ENCODE measurements at regions of chr20 and their contacts with region 1.

Region 1: DNA sequence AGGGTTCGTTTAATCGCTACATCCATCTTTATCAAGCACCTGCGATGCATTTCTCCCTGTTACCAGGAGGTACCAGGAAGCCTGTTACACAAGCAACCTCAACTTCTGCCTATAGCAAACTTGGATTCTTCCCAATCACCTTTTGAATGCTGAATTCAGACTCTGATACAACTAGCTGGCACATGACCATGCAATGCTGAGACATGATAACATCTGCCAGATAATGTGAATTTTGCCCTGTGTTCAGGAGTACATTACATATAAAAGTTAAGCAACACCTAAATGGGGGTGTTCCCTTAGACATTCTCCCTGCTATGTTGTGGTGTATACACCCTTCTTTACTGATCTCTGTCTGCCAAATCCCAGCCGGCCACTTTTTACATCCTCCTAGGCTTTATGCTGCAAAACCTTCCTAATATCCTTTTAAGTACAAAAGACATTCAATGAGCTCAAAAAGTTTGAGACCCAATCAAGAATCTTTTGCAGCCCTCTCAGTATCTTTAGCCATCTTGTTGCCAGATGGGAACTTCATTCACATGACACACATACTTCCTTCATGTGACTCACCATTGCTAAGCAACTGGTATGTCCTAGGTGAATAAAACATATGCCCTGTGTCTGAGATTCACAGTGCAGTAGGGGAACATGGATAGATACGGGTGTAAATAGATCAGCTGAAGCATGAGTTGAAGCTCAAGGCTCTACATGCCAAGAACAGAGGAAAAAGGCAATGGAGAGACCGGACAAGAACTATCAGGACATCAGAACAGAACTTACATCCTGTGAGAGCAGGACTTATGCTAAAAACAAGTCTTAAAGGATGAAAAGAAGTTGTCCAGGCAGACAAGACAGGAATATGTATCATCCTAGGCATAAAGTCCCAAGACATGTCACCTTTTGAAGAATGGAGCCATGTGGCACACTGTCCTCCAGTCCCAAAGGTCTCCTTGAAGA is 84.3 kb downstream of the ZHX3 start:
- DNase-seq: no peak
- H3K4me3 ChIP-seq: no peak overlapping the region
- H3K4me3 Mint-ChIP-seq: peak overlapping the region in 1 of 8 donors; percentile 70
- H3K27ac ChIP-seq: no peak overlapping the region
- H3K27ac Mint-ChIP-seq: peak overlapping the region in 2 of 7 donors; percentile 35 to 54
- H3K4me1 ChIP-seq: peaks cover 7% of the 10 kb centered on the region
- H3K4me1 Mint-ChIP-seq: peaks cover 8 to 24% (median 14%) of the 10 kb centered on the region in 4 donors
- H3K27me3 ChIP-seq: no peaks in the 10 kb centered on the region
- H3K27me3 Mint-ChIP-seq: no peaks in the 10 kb centered on the region

Region 2: GRCh38 chr20:41028348-41029148 is 204.7 kb before region 1 on chr20 and contains the start of gene TOP1:
- CTCF ChIA-PET with region 1: no interaction called
- POLR2A ChIA-PET with region 1: no interaction called
- intact Hi-C with region 1: loop called (anchors 1 kb)
- DNase-seq: peak; percentile 97 to 100 (median 99)
- H3K4me3 ChIP-seq: peak within 1 kb of the TSS; percentile 25 to 83
- H3K4me3 Mint-ChIP-seq: peak within 1 kb of the TSS; percentile 89 to 98 (median 95)
- H3K27ac ChIP-seq: peak within 1 kb of the TSS; percentile 97
- H3K27ac Mint-ChIP-seq: peak within 1 kb of the TSS; percentile 96 to 99 (median 97)
- H3K4me1 ChIP-seq: peaks cover 48% of the 10 kb centered on the region
- H3K4me1 Mint-ChIP-seq: peaks cover 38 to 57% (median 44%) of the 10 kb centered on the region in 4 donors
- H3K27me3 ChIP-seq: no peaks in the 10 kb centered on the region
- H3K27me3 Mint-ChIP-seq: peaks cover 0 to 2% of the 10 kb centered on the region in 2 donors
- total RNA-seq, gene TOP1: 44.4 to 47.5 TPM

Region 3: DNA sequence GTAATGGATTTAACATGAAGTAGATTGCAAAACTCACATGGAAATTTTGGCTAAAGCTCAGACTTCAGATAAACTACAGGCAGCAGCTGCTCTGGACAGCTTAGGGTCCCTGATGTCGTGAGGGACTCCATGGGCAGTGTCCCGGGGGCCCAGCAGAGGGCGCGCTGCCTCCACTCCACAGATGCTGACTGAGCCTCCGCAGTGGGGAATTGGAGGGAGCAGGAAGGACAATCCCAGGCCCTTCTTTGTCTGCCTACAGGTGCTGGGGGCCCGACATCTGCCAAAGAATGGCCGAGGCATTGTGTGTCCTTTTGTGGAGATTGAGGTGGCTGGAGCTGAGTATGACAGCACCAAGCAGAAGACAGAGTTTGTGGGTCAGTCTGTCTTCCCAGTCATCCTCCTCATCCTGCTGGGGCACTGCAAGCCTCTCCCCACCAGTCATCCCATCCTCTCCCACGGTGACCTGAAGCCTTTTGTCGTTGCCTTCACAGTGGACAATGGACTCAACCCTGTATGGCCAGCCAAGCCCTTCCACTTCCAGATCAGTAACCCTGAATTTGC is 60.0 kb before region 1 on chr20:
- CTCF ChIA-PET with region 1: interaction called, 36 read pairs
- POLR2A ChIA-PET with region 1: interaction called, 4 read pairs
- intact Hi-C with region 1: loop called (anchors 1 kb)
- DNase-seq: peak; percentile 50 to 61 (median 54)
- H3K4me3 ChIP-seq: no peak overlapping the region
- H3K4me3 Mint-ChIP-seq: no peak overlapping the region
- H3K27ac ChIP-seq: no peak overlapping the region
- H3K27ac Mint-ChIP-seq: peak overlapping the region in 6 of 7 donors; percentile 8 to 82 (median 56)
- H3K4me1 ChIP-seq: no peaks in the 10 kb centered on the region
- H3K4me1 Mint-ChIP-seq: peaks cover 0 to 29% (median 13%) of the 10 kb centered on the region in 4 donors
- H3K27me3 ChIP-seq: no peaks in the 10 kb centered on the region
- H3K27me3 Mint-ChIP-seq: no peaks in the 10 kb centered on the region

Region 4: DNA sequence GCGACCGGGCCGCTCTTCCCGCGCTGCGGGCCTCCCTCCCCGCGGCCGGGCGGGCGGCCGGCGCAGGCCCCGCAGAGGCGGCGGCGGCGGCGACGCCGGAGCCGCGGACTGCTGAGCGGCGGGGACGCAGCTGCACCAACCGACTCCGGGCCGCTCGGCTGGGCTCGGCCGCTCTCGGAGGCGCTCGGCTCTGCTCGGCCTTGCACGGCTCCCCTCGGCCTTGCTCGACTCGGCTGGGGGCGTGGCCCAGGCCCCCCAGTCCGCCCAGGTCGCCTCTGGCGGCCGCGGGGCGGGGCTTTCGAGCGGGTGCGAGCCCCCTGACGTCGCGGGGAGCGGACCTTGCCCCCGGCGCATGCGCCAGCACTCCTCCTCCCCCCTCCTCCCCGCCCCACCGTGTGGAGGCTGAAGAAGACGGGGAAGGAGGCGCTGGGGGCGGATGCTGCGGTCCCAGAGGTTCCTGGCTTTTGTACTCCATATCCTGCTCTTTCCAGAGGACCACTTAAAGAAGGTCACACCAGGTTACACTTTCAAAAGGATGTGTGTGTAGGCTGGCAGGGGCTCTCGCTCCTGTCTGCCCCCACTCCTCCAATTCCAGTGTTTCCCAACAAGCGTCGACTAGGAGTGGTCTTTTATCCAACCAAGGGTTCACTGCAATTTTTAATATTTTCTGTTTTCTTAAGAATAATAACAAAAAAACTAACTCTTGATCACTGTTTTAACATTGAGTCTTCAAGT is 84.5 kb after region 1 on chr20 and contains the start of gene ZHX3:
- CTCF ChIA-PET with region 1: no interaction called
- POLR2A ChIA-PET with region 1: no interaction called
- intact Hi-C with region 1: loop called (anchors 1 kb)
- DNase-seq: peak; percentile 91 to 97 (median 95)
- H3K4me3 ChIP-seq: peak within 1 kb of the TSS; percentile 21 to 74
- H3K4me3 Mint-ChIP-seq: peak within 1 kb of the TSS; percentile 85 to 90 (median 87)
- H3K27ac ChIP-seq: peak within 1 kb of the TSS; percentile 48
- H3K27ac Mint-ChIP-seq: peak within 1 kb of the TSS; percentile 79 to 90 (median 84)
- H3K4me1 ChIP-seq: peaks cover 16% of the 10 kb centered on the region
- H3K4me1 Mint-ChIP-seq: peaks cover 7 to 27% (median 18%) of the 10 kb centered on the region in 4 donors
- H3K27me3 ChIP-seq: no peaks in the 10 kb centered on the region
- H3K27me3 Mint-ChIP-seq: no peaks in the 10 kb centered on the region
- total RNA-seq, gene ZHX3: 5.2 to 6.3 TPM

Measured in CD4-positive, alpha-beta memory T cell (primary cell).